ENCODE measurements at regions of chr14 and their contacts with region 1.

Region 1: DNA sequence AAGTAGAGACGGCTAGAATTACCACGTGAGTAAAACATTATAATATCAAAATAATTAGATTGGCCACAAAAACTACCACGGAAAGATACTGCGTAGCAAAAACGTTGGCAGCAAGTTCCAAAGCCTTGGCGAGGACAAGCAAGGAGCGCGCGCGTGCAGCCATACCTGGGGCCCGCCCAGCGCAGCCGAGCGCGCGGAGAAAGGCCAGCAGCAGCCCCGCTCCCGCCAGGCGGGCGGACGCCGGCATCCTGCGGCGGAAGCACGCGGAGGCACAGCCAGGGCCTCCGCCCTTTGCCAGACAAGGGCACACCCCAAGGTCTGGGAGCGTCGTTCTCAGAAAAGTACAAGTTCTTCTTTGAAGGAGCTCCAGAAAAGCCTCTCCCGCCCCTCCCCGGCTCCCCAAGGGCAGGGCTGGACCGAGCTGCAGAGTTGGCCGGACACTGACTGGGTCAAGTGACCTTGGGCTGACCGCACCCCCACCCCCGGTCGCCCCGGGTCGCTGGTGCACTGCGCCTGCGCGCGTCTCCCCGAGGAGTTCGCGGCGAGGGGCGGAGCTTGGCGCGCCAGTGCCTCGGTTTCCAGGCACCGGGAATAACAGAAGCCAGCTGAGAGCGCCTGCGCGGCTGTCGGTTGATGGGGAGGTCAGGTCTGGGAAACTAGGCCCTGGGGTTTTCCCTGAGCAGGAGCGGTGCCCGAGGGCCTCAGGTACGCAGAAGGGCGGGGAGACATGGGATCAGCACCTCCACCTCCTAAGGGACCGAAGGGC is at the start of gene ZC2HC1C:
- DNase-seq: peak; percentile 81
- ATAC-seq: peak; percentile 80
- H3K4me3 ChIP-seq: peak within 1 kb of the TSS; percentile 74
- H3K27ac ChIP-seq: peak within 1 kb of the TSS; percentile 84
- H3K4me1 ChIP-seq: peaks cover 17% of the 10 kb centered on the region
- H3K27me3 ChIP-seq: no peaks in the 10 kb centered on the region
- CTCF ChIP-seq: no peak
- total RNA-seq, gene ZC2HC1C: 3.4 and 9.5 TPM in 2 replicates

Region 2: DNA sequence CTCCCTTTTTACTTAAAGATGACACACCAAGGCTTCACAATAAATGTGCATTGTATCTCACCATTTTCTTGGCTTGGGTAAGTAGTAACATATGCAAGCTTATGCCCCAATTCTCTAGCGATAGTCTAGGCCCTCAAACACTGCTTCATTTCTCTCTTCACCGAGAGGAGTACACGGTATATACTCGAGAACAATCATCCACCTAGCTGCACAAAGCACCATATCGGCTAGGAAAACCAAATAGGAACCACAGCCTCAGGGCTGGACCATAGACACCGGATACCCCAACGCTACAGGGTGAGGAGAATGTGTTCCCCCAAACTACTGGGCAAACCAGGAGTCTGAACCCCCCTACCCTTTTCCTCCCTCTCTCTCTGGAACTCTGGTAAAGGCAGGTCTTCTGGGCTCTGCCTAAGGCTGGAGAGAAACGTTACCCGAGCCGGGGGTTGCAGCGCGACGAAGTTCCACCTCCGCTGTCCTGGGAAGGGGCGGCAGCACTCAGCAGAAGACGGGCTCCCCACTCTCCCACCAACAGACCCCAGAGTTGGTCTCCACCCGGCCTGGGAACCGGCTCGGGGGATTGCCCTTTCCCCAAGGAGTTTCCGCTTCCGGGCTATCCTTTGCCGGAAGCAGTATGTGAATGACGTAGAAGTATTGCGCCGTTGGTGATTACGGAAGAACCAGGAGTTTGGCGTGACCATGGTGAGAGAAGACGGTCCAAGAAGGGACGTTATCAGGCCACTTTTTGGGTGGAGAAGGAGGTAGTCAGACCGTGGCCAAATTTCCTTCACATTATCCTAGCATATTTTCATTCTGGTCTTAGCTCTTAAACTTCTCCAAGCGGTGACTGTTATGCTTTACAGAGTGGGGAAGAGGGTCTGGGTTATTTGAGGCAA is 356.5 kb before region 1 on chr14 and contains the starts of genes AREL1 and FCF1:
- CTCF ChIA-PET with region 1: no interaction called
- POLR2A ChIA-PET with region 1: no interaction called
- intact Hi-C with region 1: no loop called
- DNase-seq: peak; percentile 93
- ATAC-seq: peak; percentile 96
- H3K4me3 ChIP-seq: peak within 1 kb of the TSS; percentile 95
- H3K27ac ChIP-seq: no peak within 1 kb of the TSS
- H3K4me1 ChIP-seq: peaks cover 8% of the 10 kb centered on the region; the same call in 1 of the 2 replicates
- H3K27me3 ChIP-seq: no peaks in the 10 kb centered on the region
- CTCF ChIP-seq: no peak
- total RNA-seq, gene AREL1: 25.4 and 32.1 TPM in 2 replicates
- total RNA-seq, gene FCF1: 29.7 and 33.1 TPM in 2 replicates

Region 3: GRCh38 chr14:74922739-74923401 is 146.4 kb before region 1 on chr14 and contains the start of gene RPS6KL1:
- CTCF ChIA-PET with region 1: no interaction called
- POLR2A ChIA-PET with region 1: interaction called, 12 read pairs
- intact Hi-C with region 1: no loop called
- DNase-seq: peak; percentile 89
- ATAC-seq: peak; percentile 96
- H3K4me3 ChIP-seq: peak within 1 kb of the TSS; percentile 82
- H3K27ac ChIP-seq: no peak within 1 kb of the TSS
- H3K4me1 ChIP-seq: peaks cover 15% of the 10 kb centered on the region; the same call in 1 of the 2 replicates
- H3K27me3 ChIP-seq: no peaks in the 10 kb centered on the region
- CTCF ChIP-seq: no peak
- total RNA-seq, gene RPS6KL1: 16.0 and 17.9 TPM in 2 replicates

Region 4: GRCh38 chr14:74978473-74978954 is 90.7 kb before region 1 on chr14:
- CTCF ChIA-PET with region 1: no interaction called
- POLR2A ChIA-PET with region 1: interaction called, 11 read pairs
- intact Hi-C with region 1: no loop called
- DNase-seq: peak; percentile 61
- ATAC-seq: peak; percentile 31
- H3K4me3 ChIP-seq: no peak overlapping the region
- H3K27ac ChIP-seq: peak overlapping the region; percentile 48
- H3K4me1 ChIP-seq: peaks cover 51% of the 10 kb centered on the region
- H3K27me3 ChIP-seq: no peaks in the 10 kb centered on the region
- CTCF ChIP-seq: no peak

Region 5: DNA sequence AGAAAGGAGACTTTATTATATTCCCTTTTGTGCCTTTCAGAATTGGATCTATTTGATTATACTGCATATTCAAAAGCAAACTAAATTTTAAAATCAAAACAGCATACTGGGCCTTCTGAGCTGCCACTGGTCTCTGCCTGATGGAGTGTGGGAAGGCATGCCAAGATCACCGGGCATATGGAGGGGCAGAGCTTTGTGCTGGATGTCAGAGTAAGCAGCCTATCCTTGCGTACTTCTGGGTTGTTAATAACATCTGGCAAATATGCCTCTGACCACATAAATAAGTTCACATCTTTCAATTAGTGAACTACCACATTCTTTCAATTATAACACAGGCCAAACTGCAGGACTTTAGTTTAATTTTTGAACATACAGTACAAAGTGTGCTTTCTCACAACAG is 36.3 kb before region 1 on chr14:
- CTCF ChIA-PET with region 1: no interaction called
- POLR2A ChIA-PET with region 1: interaction called, 12 read pairs
- intact Hi-C with region 1: no loop called
- DNase-seq: no peak
- ATAC-seq: no peak
- H3K4me3 ChIP-seq: no peak overlapping the region
- H3K27ac ChIP-seq: no peak overlapping the region
- H3K4me1 ChIP-seq: no peaks in the 10 kb centered on the region
- H3K27me3 ChIP-seq: no peaks in the 10 kb centered on the region
- CTCF ChIP-seq: no peak